PC-9 (cell line): ENCODE measurements at regions of chr3 and their contacts with region 1.

Region 1: GRCh38 chr3:156307704-156308103 is 187.3 kb downstream of the KCNAB1 start:
- DNase-seq: peak in 1 of 2 experiments; percentile 17
- H3K4me3 ChIP-seq: no peak overlapping the region
- H3K27ac ChIP-seq: no peak overlapping the region
- H3K4me1 ChIP-seq: no peaks in the 10 kb centered on the region
- H3K27me3 ChIP-seq: no peaks in the 10 kb centered on the region
- CTCF ChIP-seq: no peak

Region 2: GRCh38 chr3:156285626-156286025 is 22.1 kb before region 1 on chr3:
- CTCF ChIA-PET with region 1: interaction called, 12 read pairs
- POLR2A ChIA-PET with region 1: interaction called, 3 read pairs
- intact Hi-C with region 1: no loop called
- DNase-seq: no peak
- H3K4me3 ChIP-seq: no peak overlapping the region
- H3K27ac ChIP-seq: no peak overlapping the region
- H3K4me1 ChIP-seq: no peaks in the 10 kb centered on the region
- H3K27me3 ChIP-seq: no peaks in the 10 kb centered on the region
- CTCF ChIP-seq: no peak

Region 3: GRCh38 chr3:156353536-156353935 is 45.8 kb after region 1 on chr3:
- CTCF ChIA-PET with region 1: no interaction called
- POLR2A ChIA-PET with region 1: no interaction called
- intact Hi-C with region 1: no loop called
- DNase-seq: no peak
- H3K4me3 ChIP-seq: no peak overlapping the region
- H3K27ac ChIP-seq: no peak overlapping the region
- H3K4me1 ChIP-seq: no peaks in the 10 kb centered on the region
- H3K27me3 ChIP-seq: no peaks in the 10 kb centered on the region
- CTCF ChIP-seq: no peak